Breast epithelium (tissue), 4 donors: ENCODE measurements at regions of chr4 and their contacts with region 1.

Region 1: GRCh38 chr4:106287353-106287969 is 28.5 kb downstream of the TBCK start:
- DNase-seq: no peak
- H3K4me3 ChIP-seq: no peak overlapping the region
- H3K27ac ChIP-seq: no peak overlapping the region
- H3K4me1 ChIP-seq: no peaks in the 10 kb centered on the region
- H3K27me3 ChIP-seq: no peaks in the 10 kb centered on the region
- CTCF ChIP-seq: no peak
- POLR2A ChIP-seq: no peak

Region 2: DNA sequence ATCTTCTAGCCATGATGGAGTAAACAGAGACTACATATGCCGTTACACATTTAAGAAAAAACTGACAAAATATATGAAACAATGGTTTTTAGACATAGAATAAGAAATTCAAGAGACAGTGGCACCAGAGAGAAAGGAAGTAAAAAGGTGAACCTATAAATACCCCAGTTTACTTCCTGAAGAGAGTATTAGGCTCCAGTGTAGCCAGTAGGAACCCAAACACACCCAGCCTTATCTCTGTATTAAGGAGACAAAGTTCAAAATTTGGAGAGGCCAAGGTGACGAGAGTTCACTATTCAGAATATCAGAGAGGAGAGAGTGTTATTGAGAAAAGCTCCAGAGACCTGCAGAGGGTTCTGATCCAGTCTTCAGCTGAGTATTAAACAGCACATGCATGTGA is 1021.8 kb before region 1 on chr4:
- intact Hi-C with region 1: loop called (anchors 10 kb)
- DNase-seq: no peak
- H3K4me3 ChIP-seq: no peak overlapping the region
- H3K27ac ChIP-seq: no peak overlapping the region
- H3K4me1 ChIP-seq: no peaks in the 10 kb centered on the region
- H3K27me3 ChIP-seq: no peaks in the 10 kb centered on the region
- CTCF ChIP-seq: no peak
- POLR2A ChIP-seq: no peak